Heart right ventricle (tissue), 16 donors: ENCODE measurements at regions of chr2 and their contacts with region 1.

Region 1: GRCh38 chr2:1253629-1254028 is 159.6 kb upstream of the TPO start:
- DNase-seq: no peak
- ATAC-seq: no peak
- H3K4me3 ChIP-seq: no peak overlapping the region
- H3K27ac ChIP-seq: no peak overlapping the region
- H3K4me1 ChIP-seq: peaks cover 0 to 9% (median 0%) of the 10 kb centered on the region in 9 donors
- H3K27me3 ChIP-seq: peaks cover 0 to 13% (median 3%) of the 10 kb centered on the region in 7 donors
- CTCF ChIP-seq: no peak

Region 2: GRCh38 chr2:997662-998061 is 256.0 kb before region 1 on chr2:
- intact Hi-C with region 1: no loop called
- DNase-seq: no peak
- ATAC-seq: no peak
- H3K4me3 ChIP-seq: no peak overlapping the region
- H3K27ac ChIP-seq: no peak overlapping the region
- H3K4me1 ChIP-seq: no peaks in the 10 kb centered on the region
- H3K27me3 ChIP-seq: peaks cover 0 to 17% (median 0%) of the 10 kb centered on the region in 7 donors
- CTCF ChIP-seq: no peak

Region 3: DNA sequence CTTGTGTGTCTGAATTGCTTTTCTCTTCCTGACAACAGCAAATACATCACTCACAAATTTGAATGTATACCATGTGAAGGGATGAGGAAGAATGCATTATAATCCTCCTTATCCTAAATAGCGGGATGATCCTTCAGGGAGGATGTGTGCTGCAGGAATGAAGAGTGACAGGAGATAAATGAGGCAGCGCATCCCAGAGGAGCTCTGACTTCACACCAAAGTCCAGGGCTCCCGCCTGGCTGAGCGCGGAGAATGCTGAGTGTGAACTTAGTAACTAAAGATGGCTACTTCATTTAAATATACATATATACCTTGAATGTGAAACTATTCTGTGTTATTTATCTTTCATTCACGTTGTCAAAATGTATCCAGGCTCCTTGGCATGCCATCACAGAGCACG is 14.4 kb after region 1 on chr2:
- intact Hi-C with region 1: no loop called
- DNase-seq: no peak
- ATAC-seq: no peak
- H3K4me3 ChIP-seq: no peak overlapping the region
- H3K27ac ChIP-seq: no peak overlapping the region
- H3K4me1 ChIP-seq: no peaks in the 10 kb centered on the region
- H3K27me3 ChIP-seq: peaks cover 0 to 15% (median 0%) of the 10 kb centered on the region in 7 donors
- CTCF ChIP-seq: no peak

Region 4: DNA sequence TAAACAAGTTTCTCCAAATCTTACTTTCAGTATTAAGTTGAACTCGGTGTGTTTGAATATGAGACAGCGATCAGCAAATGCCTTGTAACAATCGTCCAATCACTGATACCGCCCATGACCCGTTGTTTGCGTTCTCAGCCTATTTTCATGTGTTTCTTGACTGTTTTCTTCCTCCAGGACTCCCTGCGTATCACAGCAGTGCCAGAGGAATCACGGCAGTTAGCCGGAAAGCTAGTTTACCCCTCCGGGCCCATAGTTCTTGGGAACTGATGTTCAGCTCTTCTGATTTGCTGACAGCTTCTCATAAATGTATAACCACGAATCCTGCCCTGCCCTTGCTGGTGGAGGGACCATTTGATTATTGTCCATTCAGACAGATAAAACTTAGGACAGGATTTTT is 117.5 kb after region 1 on chr2:
- intact Hi-C with region 1: loop called in 3 of 10 experiments (anchors 10 kb)
- DNase-seq: no peak
- ATAC-seq: no peak
- H3K4me3 ChIP-seq: no peak overlapping the region
- H3K27ac ChIP-seq: no peak overlapping the region
- H3K4me1 ChIP-seq: peaks cover 0 to 3% (median 0%) of the 10 kb centered on the region in 9 donors
- H3K27me3 ChIP-seq: peaks cover 0 to 4% (median 0%) of the 10 kb centered on the region in 7 donors
- CTCF ChIP-seq: no peak

Region 5: GRCh38 chr2:1518867-1519530 is 265.4 kb after region 1 on chr2:
- intact Hi-C with region 1: loop called in 1 of 10 experiments (anchors 10 kb)
- DNase-seq: peak; percentile 57 to 64
- ATAC-seq: peak in 7 of 8 donors; percentile 69 to 91 (median 79)
- H3K4me3 ChIP-seq: no peak overlapping the region
- H3K27ac ChIP-seq: peak overlapping the region in 8 of 10 donors; percentile 4 to 64 (median 36)
- H3K4me1 ChIP-seq: peaks cover 0 to 17% (median 6%) of the 10 kb centered on the region in 9 donors
- H3K27me3 ChIP-seq: peaks cover 0 to 10% (median 0%) of the 10 kb centered on the region in 7 donors
- CTCF ChIP-seq: peak in 1 of 9 donors; percentile 18